ENCODE measurements at regions of chr4 and their contacts with region 1.

Region 1: DNA sequence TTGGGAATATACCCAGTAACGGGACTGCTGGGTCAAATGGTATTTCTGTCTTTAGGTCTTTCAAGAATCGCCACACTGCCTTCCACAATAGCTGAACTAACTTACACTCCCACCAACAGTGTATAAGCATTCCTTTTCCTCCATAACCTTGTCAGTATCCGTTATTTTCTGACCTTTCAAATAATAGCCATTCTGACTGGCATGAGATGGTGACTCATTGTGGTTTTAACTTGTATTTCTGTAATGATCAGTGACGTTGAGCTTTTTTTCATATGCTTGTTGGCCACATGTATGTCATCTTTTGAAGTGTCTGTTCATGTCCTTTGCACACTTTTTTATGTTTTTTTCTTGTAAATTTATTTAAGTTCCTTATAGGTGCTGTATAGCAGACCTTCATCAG is 81.2 kb downstream of the ADAM29 start:
- DNase-seq: no peak
- H3K4me3 ChIP-seq: no peak overlapping the region
- H3K27ac ChIP-seq: no peak overlapping the region
- H3K4me1 ChIP-seq: peaks cover 11% of the 10 kb centered on the region
- CTCF ChIP-seq: no peak

Region 2: DNA sequence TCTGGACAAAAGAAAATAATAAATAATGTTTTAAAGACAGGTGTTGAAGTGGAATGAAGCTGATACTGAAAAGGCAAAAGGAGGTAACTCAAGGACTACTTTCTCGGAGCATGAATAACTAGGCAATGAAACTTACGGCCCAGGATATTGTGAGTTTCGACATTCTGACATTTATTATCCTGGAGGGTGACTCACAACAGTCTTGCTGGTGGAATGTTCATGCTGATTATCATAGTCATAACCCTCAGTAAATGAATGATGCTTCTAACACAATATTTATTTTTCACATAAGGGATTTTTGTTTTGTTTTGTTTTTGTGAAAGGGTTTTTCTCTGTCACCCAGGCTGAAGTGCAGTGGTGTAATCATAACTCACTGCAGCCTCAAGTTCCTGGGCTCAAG is 330.1 kb before region 1 on chr4:
- CTCF ChIA-PET with region 1: no interaction called
- POLR2A ChIA-PET with region 1: no interaction called
- intact Hi-C with region 1: no loop called
- DNase-seq: no peak
- H3K4me3 ChIP-seq: no peak overlapping the region
- H3K27ac ChIP-seq: no peak overlapping the region
- H3K4me1 ChIP-seq: no peaks in the 10 kb centered on the region
- CTCF ChIP-seq: no peak

Region 3: GRCh38 chr4:175017751-175018150 is 18.3 kb after region 1 on chr4:
- CTCF ChIA-PET with region 1: no interaction called
- POLR2A ChIA-PET with region 1: interaction called, 31 read pairs
- intact Hi-C with region 1: no loop called
- DNase-seq: no peak
- H3K4me3 ChIP-seq: no peak overlapping the region
- H3K27ac ChIP-seq: no peak overlapping the region
- H3K4me1 ChIP-seq: no peaks in the 10 kb centered on the region
- CTCF ChIP-seq: no peak

Region 4: DNA sequence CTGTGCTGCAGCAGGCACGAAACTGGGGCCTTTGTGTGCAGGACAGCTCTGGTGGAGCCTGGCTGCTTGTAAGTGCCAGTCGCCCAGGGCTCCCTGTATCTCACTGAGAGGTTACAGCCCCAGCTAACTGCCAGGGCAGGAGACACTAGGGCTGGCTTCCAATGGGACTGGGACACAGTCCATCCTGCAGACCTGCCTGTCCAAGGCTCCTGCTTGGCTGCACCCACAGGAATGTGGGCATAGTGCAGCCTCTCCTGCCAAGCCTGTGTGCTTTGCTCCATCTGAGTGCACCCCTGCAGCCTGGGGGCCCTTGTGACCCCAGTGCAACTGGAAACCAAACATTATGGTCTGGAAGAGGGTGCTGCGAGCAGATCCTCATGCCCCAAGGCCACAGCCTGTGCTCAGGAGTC is 62.8 kb after region 1 on chr4:
- CTCF ChIA-PET with region 1: no interaction called
- POLR2A ChIA-PET with region 1: no interaction called
- intact Hi-C with region 1: no loop called
- DNase-seq: no peak
- H3K4me3 ChIP-seq: no peak overlapping the region
- H3K27ac ChIP-seq: no peak overlapping the region
- H3K4me1 ChIP-seq: peaks cover 14% of the 10 kb centered on the region
- CTCF ChIP-seq: no peak

Region 5: GRCh38 chr4:175103403-175103802 is 104.0 kb after region 1 on chr4:
- CTCF ChIA-PET with region 1: no interaction called
- POLR2A ChIA-PET with region 1: no interaction called
- intact Hi-C with region 1: no loop called
- DNase-seq: no peak
- H3K4me3 ChIP-seq: no peak overlapping the region
- H3K27ac ChIP-seq: no peak overlapping the region
- H3K4me1 ChIP-seq: no peaks in the 10 kb centered on the region
- CTCF ChIP-seq: no peak

Measured in OCI-LY7 (cell line).